ENCODE measurements at regions of chr21 and their contacts with region 1.

Region 1: GRCh38 chr21:46607636-46608035 is 2.8 kb upstream of the S100B start:
- DNase-seq: no peak
- H3K4me3 ChIP-seq: no peak overlapping the region
- H3K27ac ChIP-seq: no peak overlapping the region
- H3K4me1 ChIP-seq: no peaks in the 10 kb centered on the region
- CTCF ChIP-seq: no peak

Region 2: GRCh38 chr21:46585191-46585953 is 22.3 kb before region 1 on chr21:
- CTCF ChIA-PET with region 1: no interaction called
- POLR2A ChIA-PET with region 1: interaction called, 3 read pairs
- intact Hi-C with region 1: loop called (anchors 1 kb)
- DNase-seq: peak; percentile 84
- H3K4me3 ChIP-seq: peak overlapping the region; percentile 7
- H3K27ac ChIP-seq: peak overlapping the region; percentile 27
- H3K4me1 ChIP-seq: peaks cover 17% of the 10 kb centered on the region
- CTCF ChIP-seq: 0 out of 2 replicates have a peak, but pooled peaks have one; percentile 26

Region 3: DNA sequence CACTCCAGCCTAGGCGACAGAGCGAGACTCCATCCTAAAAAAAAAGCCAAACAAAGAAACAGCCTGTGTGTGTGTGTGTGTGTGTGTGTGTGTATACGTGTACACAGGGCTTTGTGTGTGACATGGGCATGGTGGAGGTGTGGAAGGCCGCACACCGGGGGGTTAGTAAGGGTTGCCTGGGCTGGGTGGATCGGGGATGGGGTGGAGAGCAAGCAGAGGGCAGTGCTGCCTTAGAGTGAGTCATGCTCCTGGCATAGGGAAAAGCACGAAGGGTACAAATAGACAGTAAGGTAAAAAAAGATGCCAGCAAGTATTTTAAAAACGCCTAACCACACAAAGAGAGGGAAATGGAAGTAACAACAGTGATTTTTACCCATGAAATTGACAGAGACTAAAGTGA is 34.0 kb after region 1 on chr21:
- CTCF ChIA-PET with region 1: no interaction called
- POLR2A ChIA-PET with region 1: no interaction called
- intact Hi-C with region 1: no loop called
- DNase-seq: no peak
- H3K4me3 ChIP-seq: no peak overlapping the region
- H3K27ac ChIP-seq: no peak overlapping the region
- H3K4me1 ChIP-seq: peaks cover 4% of the 10 kb centered on the region
- CTCF ChIP-seq: no peak

Measured in OCI-LY7 (cell line).